H1 (cell line): ENCODE measurements at regions of chr14 and their contacts with region 1.

Region 1: GRCh38 chr14:93892923-93893558 is 34.1 kb upstream of the FAM181A start:
- DNase-seq: peak; percentile 46 to 98
- H3K4me3 ChIP-seq: peak overlapping the region in 1 of 4 experiments; percentile 10; a peak in 1 of 8 replicates
- H3K27ac ChIP-seq: no peak overlapping the region
- H3K4me1 ChIP-seq: peaks cover 4 to 20% (median 10%) of the 10 kb centered on the region in 4 experiments
- H3K27me3 ChIP-seq: no peaks in the 10 kb centered on the region; a peak in 1 of 7 replicates
- CTCF ChIP-seq: peak; percentile 88 to 96 (median 90)
- EP300 ChIP-seq: no peak
- POLR2A ChIP-seq: no peak
- RAD21 ChIP-seq: peak; percentile 71 to 82

Region 2: DNA sequence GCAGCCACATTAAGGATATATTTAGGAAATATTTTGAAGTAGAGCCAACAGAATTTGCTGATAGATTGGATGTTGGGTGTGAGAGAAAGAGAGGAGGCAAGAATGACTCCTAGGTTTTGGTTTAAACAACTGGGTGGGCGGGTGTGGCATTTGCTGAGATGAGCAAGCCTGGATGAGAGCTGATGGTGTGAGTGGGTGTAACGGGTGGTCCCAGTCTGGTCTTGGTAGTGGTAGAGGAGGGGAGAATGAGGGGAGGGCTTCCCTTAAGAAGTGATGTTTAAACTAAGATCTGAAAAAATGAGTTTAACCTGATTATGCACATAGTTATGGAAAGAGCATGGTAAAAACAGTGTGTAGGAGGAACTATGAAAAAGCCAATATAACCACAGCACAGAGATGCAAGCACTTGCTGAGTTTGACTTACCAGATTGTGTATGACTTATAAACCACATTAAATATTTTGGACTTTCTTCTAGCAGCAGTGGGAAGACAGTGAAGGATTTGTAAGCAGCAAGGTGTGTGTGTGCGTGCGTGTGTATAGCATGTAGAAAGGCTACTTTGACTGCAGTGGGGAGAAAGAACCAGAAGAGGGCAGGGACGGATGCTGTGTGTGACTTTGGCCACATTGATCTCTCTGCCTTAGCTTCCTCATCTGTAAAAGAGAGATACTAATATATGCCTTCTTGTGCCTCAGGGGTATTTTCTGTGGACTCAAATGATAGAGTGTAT is 244.4 kb before region 1 on chr14:
- CTCF ChIA-PET with region 1: interaction called, 149 read pairs
- POLR2A ChIA-PET with region 1: no interaction called
- DNase-seq: no peak
- H3K4me3 ChIP-seq: no peak overlapping the region
- H3K27ac ChIP-seq: no peak overlapping the region
- H3K4me1 ChIP-seq: no peaks in the 10 kb centered on the region
- H3K27me3 ChIP-seq: no peaks in the 10 kb centered on the region
- CTCF ChIP-seq: peak; percentile 73 to 87 (median 80)
- EP300 ChIP-seq: no peak
- POLR2A ChIP-seq: no peak
- RAD21 ChIP-seq: peak; percentile 90 to 91